Naive thymus-derived CD4-positive, alpha-beta T cell (primary cell): ENCODE measurements at regions of chr1 and their contacts with region 1.

Region 1: GRCh38 chr1:228275739-228276421 is 68.0 kb downstream of the OBSCN start:
- DNase-seq: peak; percentile 53 to 88 (median 82)
- ATAC-seq: peak; percentile 96
- H3K4me3 ChIP-seq: peak overlapping the region; percentile 77
- H3K4me3 Mint-ChIP-seq: peak overlapping the region; percentile 71 to 88 (median 82)
- H3K27ac ChIP-seq: peak overlapping the region; percentile 77
- H3K27ac Mint-ChIP-seq: peak overlapping the region in 7 of 9 donors; percentile 21 to 73 (median 60)
- H3K4me1 ChIP-seq: no peaks in the 10 kb centered on the region
- H3K4me1 Mint-ChIP-seq: peaks cover 8 to 20% (median 19%) of the 10 kb centered on the region in 7 donors
- H3K27me3 ChIP-seq: no peaks in the 10 kb centered on the region
- H3K27me3 Mint-ChIP-seq: no peaks in the 10 kb centered on the region

Region 2: GRCh38 chr1:227734856-227735538 is 540.9 kb before region 1 on chr1 and contains the starts of genes JMJD4 and SNAP47:
- CTCF ChIA-PET with region 1: no interaction called
- POLR2A ChIA-PET with region 1: no interaction called
- intact Hi-C with region 1: loop called (anchors 1 to 5 kb)
- DNase-seq: peak; percentile 85 to 98 (median 93)
- ATAC-seq: peak; percentile 94
- H3K4me3 ChIP-seq: peak within 1 kb of the TSS; percentile 72
- H3K4me3 Mint-ChIP-seq: peak within 1 kb of the TSS; percentile 87 to 97 (median 90)
- H3K27ac ChIP-seq: peak within 1 kb of the TSS; percentile 87
- H3K27ac Mint-ChIP-seq: peak within 1 kb of the TSS; percentile 62 to 96 (median 89)
- H3K4me1 ChIP-seq: peaks cover 3 to 16% of the 10 kb centered on the region in 2 donors
- H3K4me1 Mint-ChIP-seq: peaks cover 28 to 59% (median 40%) of the 10 kb centered on the region in 7 donors
- H3K27me3 ChIP-seq: no peaks in the 10 kb centered on the region
- H3K27me3 Mint-ChIP-seq: no peaks in the 10 kb centered on the region
- total RNA-seq, gene JMJD4: 12.1 to 36.8 (median 26.3) TPM
- total RNA-seq, gene SNAP47: 18.5 to 31.8 (median 27.8) TPM

Region 3: DNA sequence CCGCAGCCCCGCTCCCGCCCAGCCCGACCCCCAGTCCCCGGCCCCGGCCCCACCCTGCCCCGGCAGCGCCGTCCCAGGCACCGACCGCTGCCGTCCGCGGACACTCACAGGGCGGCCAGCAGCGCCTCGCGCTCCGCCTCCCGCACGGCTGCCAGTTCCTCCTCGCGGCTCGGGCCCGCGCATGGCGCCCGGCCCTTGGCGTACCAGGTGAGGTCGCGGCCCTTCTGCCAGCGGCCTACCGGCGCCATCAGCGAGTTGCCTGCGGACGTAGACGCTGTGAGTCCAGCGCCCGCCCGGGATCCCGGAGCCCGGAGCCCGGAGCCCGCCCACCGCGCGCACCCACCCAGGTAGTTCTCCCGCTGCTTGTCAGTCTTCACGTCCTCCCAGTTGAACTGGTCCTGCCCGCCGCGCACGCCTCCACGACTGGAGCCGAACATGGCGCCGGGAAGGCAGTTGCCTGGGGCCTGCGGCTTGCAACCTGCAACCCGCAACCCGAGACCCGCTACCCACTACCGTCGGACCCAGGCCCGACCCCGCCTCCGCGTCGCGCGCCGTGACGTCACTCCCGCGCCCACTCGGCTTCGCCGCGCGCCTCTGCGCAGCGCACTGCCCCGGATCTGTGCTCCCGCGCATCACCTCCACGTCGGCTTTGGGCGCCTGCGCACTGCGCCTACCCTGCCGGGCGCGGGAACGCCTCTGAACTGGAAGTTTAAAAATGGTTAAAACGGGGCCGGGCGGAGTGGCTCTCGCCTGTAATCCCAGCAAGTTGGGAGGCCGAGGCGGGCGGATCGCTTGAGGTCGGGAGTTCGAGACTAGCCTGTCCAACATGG is 172.9 kb before region 1 on chr1 and contains the start of gene C1orf35:
- CTCF ChIA-PET with region 1: no interaction called
- POLR2A ChIA-PET with region 1: no interaction called
- intact Hi-C with region 1: loop called (anchors 2 kb)
- DNase-seq: peak; percentile 90 to 97 (median 93)
- ATAC-seq: peak; percentile 85
- H3K4me3 ChIP-seq: peak within 1 kb of the TSS; percentile 95
- H3K4me3 Mint-ChIP-seq: peak within 1 kb of the TSS; percentile 91 to 97 (median 93)
- H3K27ac ChIP-seq: peak within 1 kb of the TSS; percentile 94
- H3K27ac Mint-ChIP-seq: peak within 1 kb of the TSS; percentile 90 to 95 (median 94)
- H3K4me1 ChIP-seq: peaks cover 17 to 20% of the 10 kb centered on the region in 2 donors
- H3K4me1 Mint-ChIP-seq: peaks cover 6 to 43% (median 23%) of the 10 kb centered on the region in 7 donors
- H3K27me3 ChIP-seq: no peaks in the 10 kb centered on the region
- H3K27me3 Mint-ChIP-seq: no peaks in the 10 kb centered on the region
- total RNA-seq, gene C1orf35: 16.8 to 31.8 (median 27.8) TPM

Region 4: DNA sequence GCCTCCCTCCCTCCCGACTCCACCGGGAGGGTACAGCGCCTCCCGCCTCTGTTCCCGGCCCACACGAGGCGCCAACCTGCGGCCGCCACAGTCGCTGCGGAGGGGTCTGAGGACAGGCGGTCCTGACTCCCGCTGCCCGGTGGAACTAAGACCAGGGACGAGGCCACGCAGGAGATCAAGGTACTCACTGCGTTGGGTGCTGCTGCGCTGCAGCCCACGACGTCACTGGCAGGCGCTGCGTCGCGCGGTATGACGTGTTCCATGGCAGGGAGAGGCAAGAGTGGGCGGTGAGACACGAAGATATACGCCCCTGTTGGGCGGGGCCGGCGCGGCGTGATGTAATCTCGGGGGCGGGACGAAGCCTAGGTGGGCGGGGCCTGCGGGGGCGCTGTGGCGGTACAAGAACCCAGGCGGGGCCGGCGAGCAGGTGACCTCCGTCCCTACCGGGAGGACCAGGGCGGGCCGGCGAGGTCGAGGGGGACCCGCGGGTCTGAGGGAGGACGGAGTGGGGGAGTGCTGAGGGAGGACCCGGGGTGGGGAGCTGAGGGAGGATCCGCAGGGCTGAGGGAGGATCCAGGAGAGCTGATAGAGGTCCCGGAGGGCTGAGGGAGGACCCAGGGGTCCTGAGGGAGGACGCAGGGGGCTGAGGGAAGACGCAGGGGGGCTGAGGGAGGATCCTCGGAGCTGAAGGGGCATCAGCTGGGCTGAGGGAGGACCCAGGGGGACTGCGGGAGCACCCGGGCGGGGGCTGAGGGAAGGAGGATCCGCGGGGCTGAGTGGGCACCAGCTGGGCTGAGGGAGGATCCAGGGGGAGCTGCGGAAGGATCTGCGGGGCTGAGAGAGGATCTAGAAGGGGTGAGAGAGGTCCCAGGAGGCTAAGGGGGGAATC is 166.6 kb before region 1 on chr1 and contains the start of gene MRPL55:
- CTCF ChIA-PET with region 1: no interaction called
- POLR2A ChIA-PET with region 1: no interaction called
- intact Hi-C with region 1: loop called (anchors 1 to 2 kb)
- DNase-seq: peak; percentile 97 to 100 (median 99)
- ATAC-seq: peak; percentile 99
- H3K4me3 ChIP-seq: peak within 1 kb of the TSS; percentile 100
- H3K4me3 Mint-ChIP-seq: peak within 1 kb of the TSS; percentile 87 to 95 (median 93)
- H3K27ac ChIP-seq: peak within 1 kb of the TSS; percentile 94
- H3K27ac Mint-ChIP-seq: peak within 1 kb of the TSS; percentile 88 to 98 (median 95)
- H3K4me1 ChIP-seq: peaks cover 9 to 16% of the 10 kb centered on the region in 2 donors
- H3K4me1 Mint-ChIP-seq: peaks cover 5 to 37% (median 26%) of the 10 kb centered on the region in 7 donors
- H3K27me3 ChIP-seq: no peaks in the 10 kb centered on the region
- H3K27me3 Mint-ChIP-seq: peaks cover 0 to 3% (median 0%) of the 10 kb centered on the region in 5 donors
- total RNA-seq, gene MRPL55: 34.3 to 79.3 (median 65.2) TPM

Region 5: DNA sequence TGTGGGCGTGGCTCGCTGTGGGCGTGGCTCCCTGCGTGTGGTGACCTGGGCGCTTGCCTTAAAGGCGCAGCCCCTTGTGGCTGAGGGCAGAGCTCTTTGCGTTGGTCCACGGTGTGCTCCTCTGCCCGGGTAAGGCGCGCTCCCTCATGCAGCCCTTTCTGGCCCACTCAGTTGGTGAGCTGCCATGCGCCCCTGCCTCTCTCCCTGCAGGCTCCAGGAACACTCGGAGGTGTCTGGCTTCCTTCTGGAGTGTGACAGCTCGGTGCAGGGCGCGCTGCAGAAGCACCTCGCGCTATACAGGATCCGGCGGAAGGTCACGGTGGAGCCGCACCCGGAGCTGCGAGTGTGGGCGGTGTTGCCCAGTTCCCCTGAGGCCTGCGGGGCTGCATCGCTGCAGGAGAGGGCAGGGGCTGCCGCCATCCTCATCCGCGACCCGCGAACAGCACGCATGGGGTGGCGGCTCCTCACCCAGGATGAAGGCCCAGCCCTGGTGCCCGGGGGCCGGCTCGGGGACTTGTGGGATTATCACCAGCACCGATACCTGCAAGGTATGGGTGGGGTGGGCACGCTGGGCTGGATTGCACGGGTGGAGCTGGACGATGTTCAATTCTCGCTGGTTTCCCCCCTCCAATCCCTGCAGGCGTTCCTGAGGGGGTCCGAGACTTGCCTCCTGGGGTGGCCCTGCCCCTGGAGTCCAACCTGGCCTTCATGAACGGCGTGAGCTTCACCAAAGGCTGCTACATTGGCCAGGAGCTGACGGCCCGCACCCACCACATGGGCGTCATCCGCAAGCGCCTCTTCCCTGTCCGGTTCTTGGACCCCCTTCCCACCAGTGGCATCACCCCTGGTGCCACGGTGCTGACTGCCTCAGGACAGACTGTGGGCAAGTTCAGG is 101.2 kb before region 1 on chr1:
- CTCF ChIA-PET with region 1: interaction called, 3 read pairs
- POLR2A ChIA-PET with region 1: no interaction called
- intact Hi-C with region 1: loop called in 1 of 2 experiments (anchors 1 kb)
- DNase-seq: peak in 5 of 9 donors; percentile 24 to 58 (median 34)
- ATAC-seq: peak; percentile 78
- H3K4me3 ChIP-seq: no peak overlapping the region
- H3K4me3 Mint-ChIP-seq: no peak overlapping the region
- H3K27ac ChIP-seq: no peak overlapping the region
- H3K27ac Mint-ChIP-seq: peak overlapping the region in 1 of 9 donors; percentile 67
- H3K4me1 ChIP-seq: no peaks in the 10 kb centered on the region
- H3K4me1 Mint-ChIP-seq: peaks cover 3 to 18% (median 10%) of the 10 kb centered on the region in 7 donors
- H3K27me3 ChIP-seq: no peaks in the 10 kb centered on the region
- H3K27me3 Mint-ChIP-seq: no peaks in the 10 kb centered on the region

Region 6: GRCh38 chr1:228500901-228501871 is 225.3 kb after region 1 on chr1:
- CTCF ChIA-PET with region 1: no interaction called
- POLR2A ChIA-PET with region 1: no interaction called
- intact Hi-C with region 1: loop called in 1 of 2 experiments (anchors 10 kb)
- DNase-seq: peak; percentile 72 to 89 (median 85)
- ATAC-seq: peak; percentile 99
- H3K4me3 ChIP-seq: peak overlapping the region; percentile 44
- H3K4me3 Mint-ChIP-seq: peak overlapping the region; percentile 71 to 86 (median 80)
- H3K27ac ChIP-seq: no peak overlapping the region
- H3K27ac Mint-ChIP-seq: peak overlapping the region in 5 of 9 donors; percentile 19 to 72 (median 66)
- H3K4me1 ChIP-seq: peaks cover 9 to 14% of the 10 kb centered on the region in 2 donors
- H3K4me1 Mint-ChIP-seq: peaks cover 9 to 31% (median 18%) of the 10 kb centered on the region in 7 donors
- H3K27me3 ChIP-seq: no peaks in the 10 kb centered on the region
- H3K27me3 Mint-ChIP-seq: peaks cover 0 to 8% (median 0%) of the 10 kb centered on the region in 5 donors